Calu3 (cell line): ENCODE measurements at regions of chr5 and their contacts with region 1.

Region 1: DNA sequence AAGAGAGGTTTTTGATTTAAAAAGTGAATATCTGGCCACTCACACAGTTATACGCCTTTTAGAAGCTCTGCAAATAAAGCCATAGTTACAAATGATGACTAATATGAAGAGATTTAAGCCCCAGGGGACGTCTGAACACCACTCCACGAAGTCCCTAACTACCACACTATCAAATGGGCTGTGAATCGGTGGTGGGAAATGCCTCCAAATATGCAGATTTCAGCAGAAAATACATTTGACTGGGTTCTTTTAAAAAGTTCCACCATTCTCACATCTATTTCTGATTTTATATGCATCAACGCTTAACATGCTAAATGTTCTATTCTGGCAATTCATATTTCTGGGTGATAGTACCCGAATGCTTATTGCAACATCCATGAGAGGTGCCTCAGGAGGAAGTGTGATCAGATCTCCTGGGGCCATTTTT is 22.5 kb downstream of the TICAM2 start:
- DNase-seq: no peak
- H3K4me3 Mint-ChIP-seq: no peak overlapping the region
- H3K27ac Mint-ChIP-seq: no peak overlapping the region
- H3K4me1 Mint-ChIP-seq: peaks cover 13% of the 10 kb centered on the region
- H3K27me3 Mint-ChIP-seq: no peaks in the 10 kb centered on the region
- CTCF ChIP-seq: no peak

Region 2: DNA sequence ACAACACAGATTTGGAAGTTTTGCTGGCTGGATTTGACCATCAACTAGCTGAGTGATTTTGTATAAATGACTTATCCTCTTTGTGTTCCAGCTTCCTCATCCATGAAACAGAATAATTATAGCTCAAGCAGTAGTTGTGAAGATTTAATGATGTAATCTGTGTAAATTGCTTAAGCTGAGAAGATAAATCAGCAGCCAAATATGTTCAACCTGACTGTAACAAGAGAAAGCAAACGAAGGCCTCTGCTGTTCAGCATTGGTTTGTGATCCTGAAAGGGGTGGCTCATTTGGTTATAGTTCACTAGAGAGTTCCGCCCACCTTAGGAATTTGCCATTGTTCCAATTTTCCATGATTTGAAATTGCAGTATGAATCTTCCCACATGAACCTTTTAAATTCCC is 207.6 kb before region 1 on chr5:
- CTCF ChIA-PET with region 1: interaction called, 51 read pairs
- intact Hi-C with region 1: loop called (anchors 1 kb)
- DNase-seq: no peak
- H3K4me3 Mint-ChIP-seq: no peak overlapping the region
- H3K27ac Mint-ChIP-seq: no peak overlapping the region
- H3K4me1 Mint-ChIP-seq: peaks cover 33% of the 10 kb centered on the region
- H3K27me3 Mint-ChIP-seq: no peaks in the 10 kb centered on the region
- CTCF ChIP-seq: no peak